ENCODE measurements at regions of chr5 and their contacts with region 1.

Region 1: DNA sequence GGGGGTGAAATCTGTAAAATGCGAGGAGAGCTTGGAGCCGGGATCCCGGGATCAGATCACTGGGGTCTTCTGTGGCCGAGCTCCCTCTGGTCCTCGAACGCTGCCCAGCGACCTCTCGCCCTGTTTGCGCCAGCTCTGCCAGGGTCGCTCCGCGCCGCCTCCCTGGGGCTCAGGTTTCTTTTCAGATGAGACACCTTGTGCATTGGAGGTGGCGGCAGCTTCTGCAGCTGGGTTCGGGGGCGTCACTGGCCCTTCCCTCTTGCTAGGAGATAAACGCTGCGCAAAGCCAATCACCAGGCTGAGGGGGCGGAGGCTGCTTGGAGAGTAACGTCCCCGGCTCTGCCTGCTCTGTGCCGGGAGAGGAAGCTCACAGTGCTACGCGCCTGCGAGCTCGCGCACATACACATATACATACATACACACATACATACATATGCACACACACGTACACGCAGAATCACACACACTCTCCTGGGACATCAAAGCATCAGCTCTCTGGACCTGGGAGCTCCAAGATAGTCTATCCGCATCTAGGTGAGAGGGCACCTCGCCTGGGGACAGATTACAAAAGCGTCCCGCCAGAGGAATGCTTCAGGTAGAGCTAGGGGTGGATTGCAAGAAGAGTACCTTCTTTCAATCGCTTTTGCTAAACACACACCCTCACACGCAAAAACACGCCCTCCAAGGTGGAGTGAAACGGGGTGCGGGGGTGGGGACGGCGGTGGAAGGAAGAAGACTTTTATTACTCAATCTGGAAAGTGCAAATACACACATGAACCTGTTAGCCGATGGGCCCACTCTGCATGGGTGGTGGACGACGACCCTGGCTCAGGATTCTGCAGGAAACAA is at the start of gene ST8SIA4:
- DNase-seq: peak; percentile 82 to 95
- ATAC-seq: peak; percentile 69 to 86 (median 70)
- H3K4me3 ChIP-seq: peak within 1 kb of the TSS; percentile 72
- H3K4me3 Mint-ChIP-seq: peak within 1 kb of the TSS; percentile 96
- H3K27ac ChIP-seq: peak within 1 kb of the TSS; percentile 95
- H3K27ac Mint-ChIP-seq: peak within 1 kb of the TSS; percentile 99 to 100
- H3K4me1 ChIP-seq: peaks cover 30% of the 10 kb centered on the region
- H3K4me1 Mint-ChIP-seq: peaks cover 63 to 64% of the 10 kb centered on the region in 2 donors
- H3K27me3 ChIP-seq: no peaks in the 10 kb centered on the region
- H3K27me3 Mint-ChIP-seq: no peaks in the 10 kb centered on the region
- CTCF ChIP-seq: no peak
- total RNA-seq, gene ST8SIA4: 36.3 to 63.1 (median 59.9) TPM

Region 2: DNA sequence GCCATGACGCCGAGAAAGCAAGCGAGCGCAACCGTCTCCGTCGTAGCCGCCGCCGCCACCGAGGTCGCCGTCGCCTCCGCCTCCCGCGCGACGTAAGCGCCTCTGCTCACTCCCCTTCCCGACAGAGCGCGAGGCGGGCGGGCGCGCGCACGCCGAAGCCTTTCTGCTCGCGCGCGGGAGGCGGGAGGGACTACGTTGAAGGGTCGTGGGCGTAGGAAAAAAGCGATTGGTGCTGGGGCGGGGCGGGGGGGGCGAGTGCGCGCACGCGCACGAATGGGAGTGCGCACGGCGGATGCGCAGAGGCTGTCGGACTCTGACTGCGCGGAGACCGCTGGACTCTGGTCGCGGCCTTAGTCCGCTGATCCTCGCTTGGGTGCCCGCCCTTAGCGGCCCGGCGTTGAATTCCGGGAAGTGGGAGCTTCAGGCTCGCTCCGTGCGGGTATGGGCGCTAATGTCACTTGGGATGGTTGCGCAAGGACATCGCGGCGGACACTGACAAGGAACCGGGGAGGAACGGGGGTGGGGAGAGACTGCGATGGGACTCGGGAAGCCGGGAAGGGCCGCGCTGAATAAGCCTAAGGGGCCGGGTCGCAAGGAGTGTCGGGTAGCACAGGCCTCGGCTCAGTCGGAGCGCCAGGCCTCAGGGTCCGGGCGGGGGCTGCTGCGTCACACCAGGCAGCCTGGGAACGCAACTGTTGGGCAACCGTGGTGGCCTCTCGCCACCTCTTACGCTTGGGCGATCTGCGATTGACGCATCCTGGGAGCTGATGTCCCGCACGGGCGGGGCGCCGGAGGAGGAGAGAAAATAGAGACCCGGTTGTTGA is 1974.2 kb before region 1 on chr5 and contains the start of gene CHD1:
- intact Hi-C with region 1: loop called (anchors 5 kb)
- DNase-seq: peak; percentile 95 to 98
- ATAC-seq: peak; percentile 67 to 88 (median 74)
- H3K4me3 ChIP-seq: peak within 1 kb of the TSS; percentile 79
- H3K4me3 Mint-ChIP-seq: peak within 1 kb of the TSS; percentile 99
- H3K27ac ChIP-seq: peak within 1 kb of the TSS; percentile 98
- H3K27ac Mint-ChIP-seq: peak within 1 kb of the TSS; percentile 97 to 98
- H3K4me1 ChIP-seq: peaks cover 17% of the 10 kb centered on the region
- H3K4me1 Mint-ChIP-seq: peaks cover 44 to 60% of the 10 kb centered on the region in 2 donors
- H3K27me3 ChIP-seq: no peaks in the 10 kb centered on the region
- H3K27me3 Mint-ChIP-seq: no peaks in the 10 kb centered on the region
- CTCF ChIP-seq: no peak
- total RNA-seq, gene CHD1: 116 to 127 (median 117) TPM

Region 3: DNA sequence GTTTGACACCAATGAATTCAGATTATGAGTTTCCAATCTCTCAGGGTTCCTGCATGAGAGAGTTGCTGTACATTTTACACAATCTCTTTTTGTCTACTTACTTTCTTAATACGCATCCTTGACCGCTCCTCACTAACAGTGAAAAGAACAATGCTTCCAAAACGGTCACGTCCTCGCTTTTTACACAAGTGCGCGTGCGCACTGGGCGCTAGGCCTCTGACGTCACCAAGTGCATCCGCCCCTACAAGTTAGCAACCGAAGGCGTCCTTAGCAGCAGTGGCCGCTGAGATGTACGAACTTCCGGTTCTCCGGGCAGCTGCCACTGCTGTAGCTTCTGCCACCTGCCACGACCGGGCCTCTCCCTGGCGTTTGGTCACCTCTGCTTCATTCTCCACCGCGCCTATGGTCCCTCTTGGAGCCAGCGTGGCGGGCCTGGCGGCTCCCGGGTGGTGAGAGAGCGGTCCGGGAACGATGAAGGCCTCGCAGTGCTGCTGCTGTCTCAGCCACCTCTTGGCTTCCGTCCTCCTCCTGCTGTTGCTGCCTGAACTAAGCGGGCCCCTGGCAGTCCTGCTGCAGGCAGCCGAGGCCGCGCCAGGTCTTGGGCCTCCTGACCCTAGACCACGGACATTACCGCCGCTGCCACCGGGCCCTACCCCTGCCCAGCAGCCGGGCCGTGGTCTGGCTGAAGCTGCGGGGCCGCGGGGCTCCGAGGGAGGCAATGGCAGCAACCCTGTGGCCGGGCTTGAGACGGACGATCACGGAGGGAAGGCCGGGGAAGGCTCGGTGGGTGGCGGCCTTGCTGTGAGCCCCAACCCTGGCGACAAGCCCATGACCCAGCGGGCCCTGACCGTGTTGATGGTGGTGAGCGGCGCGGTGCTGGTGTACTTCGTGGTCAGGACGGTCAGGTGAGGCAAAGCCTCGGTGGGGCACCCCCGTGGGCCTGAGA is 367.9 kb before region 1 on chr5 and contains the start of gene FAM174A:
- intact Hi-C with region 1: loop called (anchors 1 kb)
- DNase-seq: peak; percentile 92 to 99
- ATAC-seq: peak; percentile 91 to 93 (median 92)
- H3K4me3 ChIP-seq: peak within 1 kb of the TSS; percentile 88
- H3K4me3 Mint-ChIP-seq: peak within 1 kb of the TSS; percentile 96
- H3K27ac ChIP-seq: peak within 1 kb of the TSS; percentile 95
- H3K27ac Mint-ChIP-seq: peak within 1 kb of the TSS; percentile 93 to 94
- H3K4me1 ChIP-seq: peaks cover 9% of the 10 kb centered on the region
- H3K4me1 Mint-ChIP-seq: peaks cover 36 to 38% of the 10 kb centered on the region in 2 donors
- H3K27me3 ChIP-seq: no peaks in the 10 kb centered on the region
- H3K27me3 Mint-ChIP-seq: peaks cover 14 to 17% of the 10 kb centered on the region in 2 donors
- CTCF ChIP-seq: no peak
- total RNA-seq, gene FAM174A: 10.2 to 13.0 (median 10.4) TPM

Region 4: DNA sequence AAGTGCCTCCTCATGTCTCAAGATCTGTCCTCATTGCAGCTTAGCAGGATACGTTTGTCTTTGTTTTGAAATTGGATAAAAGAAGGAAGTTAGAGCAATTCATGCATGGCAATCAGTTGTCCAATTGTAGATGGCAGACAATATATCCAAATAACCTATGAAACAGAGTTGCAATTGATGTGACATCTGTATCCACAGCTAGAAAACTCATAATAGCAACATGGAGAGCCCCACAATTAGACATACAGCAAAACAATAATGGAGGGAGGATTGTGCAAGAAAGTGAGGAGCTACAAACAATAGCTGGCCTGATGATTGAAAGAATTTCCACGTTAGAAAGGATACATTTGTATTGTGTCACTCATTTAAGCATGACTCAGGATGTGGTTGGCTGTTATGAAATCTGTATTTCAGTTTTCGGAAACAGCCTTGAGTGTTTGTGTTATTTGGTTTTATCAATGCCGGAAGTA is 236.1 kb before region 1 on chr5:
- intact Hi-C with region 1: loop called (anchors 5 kb)
- DNase-seq: peak in 1 of 2 donors; percentile 57
- ATAC-seq: peak; percentile 88 to 96 (median 94)
- H3K4me3 ChIP-seq: no peak overlapping the region
- H3K4me3 Mint-ChIP-seq: peak overlapping the region; percentile 8
- H3K27ac ChIP-seq: no peak overlapping the region
- H3K27ac Mint-ChIP-seq: peak overlapping the region; percentile 77 to 82
- H3K4me1 ChIP-seq: peaks cover 5% of the 10 kb centered on the region
- H3K4me1 Mint-ChIP-seq: peaks cover 19 to 21% of the 10 kb centered on the region in 2 donors
- H3K27me3 ChIP-seq: no peaks in the 10 kb centered on the region
- H3K27me3 Mint-ChIP-seq: no peaks in the 10 kb centered on the region
- CTCF ChIP-seq: no peak

Region 5: GRCh38 chr5:100840384-100840783 is 62.9 kb before region 1 on chr5:
- intact Hi-C with region 1: loop called (anchors 1 kb)
- DNase-seq: peak in 1 of 2 donors; percentile 65
- ATAC-seq: peak; percentile 56 to 84 (median 65)
- H3K4me3 ChIP-seq: no peak overlapping the region
- H3K4me3 Mint-ChIP-seq: peak overlapping the region; percentile 69
- H3K27ac ChIP-seq: no peak overlapping the region
- H3K27ac Mint-ChIP-seq: peak overlapping the region; percentile 85
- H3K4me1 ChIP-seq: no peaks in the 10 kb centered on the region
- H3K4me1 Mint-ChIP-seq: peaks cover 65 to 73% of the 10 kb centered on the region in 2 donors
- H3K27me3 ChIP-seq: no peaks in the 10 kb centered on the region
- H3K27me3 Mint-ChIP-seq: no peaks in the 10 kb centered on the region
- CTCF ChIP-seq: no peak

Region 6: GRCh38 chr5:100872408-100873190 is 30.7 kb before region 1 on chr5:
- intact Hi-C with region 1: no loop called
- DNase-seq: peak in 1 of 2 donors; percentile 51
- ATAC-seq: peak; percentile 87 to 96 (median 93)
- H3K4me3 ChIP-seq: no peak overlapping the region
- H3K4me3 Mint-ChIP-seq: no peak overlapping the region
- H3K27ac ChIP-seq: no peak overlapping the region
- H3K27ac Mint-ChIP-seq: peak overlapping the region; percentile 78 to 80
- H3K4me1 ChIP-seq: no peaks in the 10 kb centered on the region
- H3K4me1 Mint-ChIP-seq: peaks cover 35 to 38% of the 10 kb centered on the region in 2 donors
- H3K27me3 ChIP-seq: no peaks in the 10 kb centered on the region
- H3K27me3 Mint-ChIP-seq: no peaks in the 10 kb centered on the region
- CTCF ChIP-seq: no peak

Region 7: GRCh38 chr5:101035425-101035824 is 132.2 kb after region 1 on chr5:
- intact Hi-C with region 1: no loop called
- DNase-seq: no peak
- ATAC-seq: no peak
- H3K4me3 ChIP-seq: no peak overlapping the region
- H3K4me3 Mint-ChIP-seq: no peak overlapping the region
- H3K27ac ChIP-seq: no peak overlapping the region
- H3K27ac Mint-ChIP-seq: no peak overlapping the region
- H3K4me1 ChIP-seq: no peaks in the 10 kb centered on the region
- H3K4me1 Mint-ChIP-seq: no peaks in the 10 kb centered on the region
- H3K27me3 ChIP-seq: no peaks in the 10 kb centered on the region
- H3K27me3 Mint-ChIP-seq: peaks cover 0 to 24% of the 10 kb centered on the region in 2 donors
- CTCF ChIP-seq: no peak

Measured in natural killer cell (primary cell).